Activated T-helper 1 cell treated with anti-CD3 and anti-CD28 coated beads, Interleukin-12 subunit alpha, Interleukin-12 subunit beta, Interleukin-2, Interleukin-4 antibody, amounts not matched to agents 30 ng/mL and 10 ng/mL and 1 ng/mL, durations not matched to agents 14 hours and 24 hours and 36 hours (primary cell): ENCODE measurements at regions of chr15 and their contacts with region 1.

Region 1: DNA sequence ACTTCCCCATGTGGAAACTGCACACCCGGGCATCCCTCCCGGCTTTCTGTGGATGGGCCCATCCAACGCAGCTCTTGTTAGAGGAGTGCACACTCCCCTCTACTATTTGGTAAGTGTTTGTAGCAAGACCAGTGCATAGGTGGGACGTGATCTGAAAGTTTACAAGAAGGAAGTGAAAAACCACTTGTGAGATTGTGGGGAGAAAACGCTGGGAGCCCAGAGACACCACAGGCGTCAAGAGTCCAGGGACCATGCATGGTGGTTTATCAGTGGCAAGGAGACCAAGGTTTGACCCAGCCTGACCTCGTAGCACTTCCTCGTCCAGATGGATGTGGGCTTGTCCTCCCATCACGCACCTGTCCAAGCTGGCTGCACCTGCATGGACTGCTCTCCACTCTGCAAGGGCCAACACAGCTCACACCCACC is 51.6 kb downstream of the ATP10A start:
- DNase-seq: no peak
- H3K4me3 Mint-ChIP-seq: peak overlapping the region; percentile 74
- H3K27ac Mint-ChIP-seq: peak overlapping the region; percentile 81
- H3K4me1 Mint-ChIP-seq: peaks cover 62% of the 10 kb centered on the region
- H3K27me3 Mint-ChIP-seq: no peaks in the 10 kb centered on the region

Region 2: DNA sequence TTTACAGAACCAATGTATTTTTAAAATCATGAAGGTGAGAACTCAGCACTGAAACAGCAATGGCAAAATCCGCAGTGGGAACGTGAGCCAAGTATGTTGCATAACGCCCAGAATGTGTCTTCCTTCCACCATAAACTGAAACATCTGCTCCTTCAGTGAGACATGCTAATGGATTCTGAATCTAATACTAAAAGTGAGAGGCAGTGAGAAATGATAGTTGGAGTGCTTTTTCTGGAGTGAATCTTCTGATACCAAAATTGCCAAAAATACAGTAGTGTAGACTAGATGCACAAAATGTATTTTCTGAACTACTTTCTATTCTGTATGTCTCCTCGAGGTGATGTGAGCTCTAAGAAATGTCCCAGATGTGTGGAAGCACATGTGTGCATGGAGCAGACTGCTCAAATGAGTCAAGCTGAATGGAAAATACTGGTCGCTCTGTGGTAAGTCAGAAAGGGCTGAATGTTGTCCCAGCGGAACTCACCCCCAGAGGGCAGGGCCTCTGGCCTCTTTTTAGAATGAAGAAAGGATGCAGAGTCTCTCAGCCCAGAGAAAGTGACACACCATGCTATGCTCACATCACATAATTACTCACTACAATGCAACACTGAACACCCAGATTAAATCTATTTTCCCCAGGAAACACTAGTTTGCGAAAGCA is 21.4 kb before region 1 on chr15:
- intact Hi-C with region 1: loop called (anchors 1 kb)
- DNase-seq: peak; percentile 33
- H3K4me3 Mint-ChIP-seq: no peak overlapping the region
- H3K27ac Mint-ChIP-seq: peak overlapping the region; percentile 87
- H3K4me1 Mint-ChIP-seq: peaks cover 56% of the 10 kb centered on the region
- H3K27me3 Mint-ChIP-seq: no peaks in the 10 kb centered on the region

Region 3: DNA sequence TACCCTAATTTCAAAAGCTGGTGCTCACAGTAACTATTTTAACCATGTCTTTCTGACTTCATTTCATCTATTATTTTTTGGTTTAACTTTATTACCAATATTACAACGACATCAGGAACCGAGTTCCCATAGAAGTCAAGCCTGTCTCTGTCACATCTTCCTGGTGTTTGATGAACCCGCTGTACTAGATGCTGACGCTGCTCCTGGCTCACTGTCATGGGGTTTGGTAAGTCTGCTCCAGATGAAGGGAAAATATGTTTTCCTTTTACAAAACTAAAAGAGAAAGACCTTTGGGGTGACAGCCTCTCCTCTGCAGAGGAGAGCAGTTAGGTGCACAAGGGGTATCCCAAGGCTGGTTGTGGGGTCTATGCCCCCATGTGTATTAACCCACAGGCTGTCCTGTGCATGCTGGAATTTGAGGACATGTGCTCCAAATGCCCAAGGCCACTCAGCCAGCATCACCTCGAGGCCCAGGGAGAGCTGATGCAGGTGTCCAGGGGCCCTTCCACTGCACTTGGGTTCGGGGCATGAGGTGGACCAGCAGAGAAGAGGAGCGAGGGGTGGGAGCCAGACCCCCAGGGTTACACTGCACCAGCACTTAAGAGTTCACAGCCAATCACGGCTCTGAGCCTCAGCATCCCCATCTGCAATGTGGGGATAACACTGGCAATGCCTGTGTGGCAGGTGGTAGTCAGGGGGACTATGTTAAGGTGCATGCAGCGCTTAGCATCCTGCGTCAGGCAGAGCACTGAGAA is 10.6 kb before region 1 on chr15:
- intact Hi-C with region 1: no loop called
- DNase-seq: no peak
- H3K4me3 Mint-ChIP-seq: no peak overlapping the region
- H3K27ac Mint-ChIP-seq: no peak overlapping the region
- H3K4me1 Mint-ChIP-seq: peaks cover 31% of the 10 kb centered on the region
- H3K27me3 Mint-ChIP-seq: no peaks in the 10 kb centered on the region

Region 4: GRCh38 chr15:25832158-25832557 is 20.7 kb after region 1 on chr15:
- intact Hi-C with region 1: loop called (anchors 2 kb)
- DNase-seq: no peak
- H3K4me3 Mint-ChIP-seq: no peak overlapping the region
- H3K27ac Mint-ChIP-seq: peak overlapping the region; percentile 87
- H3K4me1 Mint-ChIP-seq: peaks cover 28% of the 10 kb centered on the region
- H3K27me3 Mint-ChIP-seq: no peaks in the 10 kb centered on the region

Region 5: DNA sequence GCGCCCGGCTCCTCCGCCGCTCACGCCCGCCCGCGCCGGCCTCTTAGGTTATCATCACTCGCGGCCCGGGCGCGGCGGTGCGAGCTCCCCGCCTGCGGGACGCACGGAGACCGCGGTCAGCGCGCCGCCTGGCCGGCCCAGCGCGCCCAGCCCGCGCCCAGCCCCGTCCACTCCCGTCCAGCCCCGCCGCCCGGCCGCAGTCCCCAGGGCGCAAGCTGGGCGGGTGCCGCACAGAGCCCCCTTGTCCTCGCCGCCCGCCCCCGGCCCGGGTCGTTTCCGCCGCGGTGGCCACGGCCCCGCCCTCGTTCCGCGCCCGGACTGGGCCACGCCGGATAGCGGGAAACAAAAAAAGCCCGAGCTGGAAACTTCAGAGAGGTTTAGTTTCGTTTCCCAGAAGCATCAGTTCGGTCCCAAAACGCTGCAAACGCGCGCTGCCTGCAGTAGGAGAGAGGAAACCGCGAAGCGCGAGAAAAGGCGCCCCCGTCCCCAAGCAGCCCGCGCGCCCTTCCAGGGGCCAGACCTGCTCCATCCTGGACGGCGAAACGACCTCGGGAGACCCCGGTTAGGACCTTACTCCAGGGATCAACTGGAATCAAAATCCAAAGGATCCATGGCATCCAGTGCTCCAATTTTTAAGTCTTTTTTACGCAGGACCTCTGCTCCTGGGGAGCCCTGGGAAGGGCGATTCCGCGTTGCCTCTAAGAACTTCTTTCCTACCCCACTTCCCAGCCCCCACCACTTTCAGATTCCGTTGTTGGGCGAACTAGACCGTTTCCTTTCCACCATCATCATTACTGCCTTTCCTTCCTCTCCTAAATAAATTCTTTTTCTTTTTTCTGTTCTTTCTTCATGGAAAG is 51.8 kb after region 1 on chr15 and contains the start of gene ATP10A:
- intact Hi-C with region 1: loop called (anchors 2 kb)
- DNase-seq: peak; percentile 68
- H3K4me3 Mint-ChIP-seq: peak within 1 kb of the TSS; percentile 95
- H3K27ac Mint-ChIP-seq: peak within 1 kb of the TSS; percentile 91
- H3K4me1 Mint-ChIP-seq: peaks cover 52% of the 10 kb centered on the region
- H3K27me3 Mint-ChIP-seq: peaks cover 9% of the 10 kb centered on the region
- total RNA-seq, gene ATP10A: 42.8 and 47.9 TPM in 2 replicates

Region 6: DNA sequence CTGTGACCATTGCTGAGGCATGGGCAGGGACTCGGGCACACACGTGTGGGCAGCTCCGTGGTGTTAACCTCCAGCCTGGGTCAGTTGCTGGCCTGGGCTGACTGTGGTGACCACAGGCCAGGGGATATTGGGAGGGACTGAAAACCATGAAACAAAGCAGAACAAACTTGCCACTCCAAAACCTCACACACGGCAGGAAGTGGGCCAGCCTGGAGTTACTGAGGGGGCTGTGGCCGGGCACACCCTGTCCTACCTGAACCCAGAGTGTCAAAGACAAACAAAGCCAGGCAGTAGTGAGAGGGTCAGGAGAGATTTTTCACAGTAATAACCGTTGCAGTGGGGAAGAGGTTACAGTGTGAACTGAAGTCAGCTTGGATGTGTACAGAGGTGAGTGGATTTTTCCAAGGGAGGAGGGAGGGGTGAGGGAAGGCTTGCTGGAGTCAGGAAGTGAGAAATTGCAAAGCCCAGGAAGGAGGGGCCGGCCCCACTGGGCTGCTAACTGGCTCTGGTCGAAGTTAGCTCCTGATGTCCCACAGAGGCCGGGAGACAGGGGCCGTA is 91.6 kb after region 1 on chr15:
- intact Hi-C with region 1: no loop called
- DNase-seq: no peak
- H3K4me3 Mint-ChIP-seq: no peak overlapping the region
- H3K27ac Mint-ChIP-seq: no peak overlapping the region
- H3K4me1 Mint-ChIP-seq: peaks cover 14% of the 10 kb centered on the region
- H3K27me3 Mint-ChIP-seq: peaks cover 1% of the 10 kb centered on the region